ENCODE measurements at regions of chr6 and their contacts with region 1.

Region 1: DNA sequence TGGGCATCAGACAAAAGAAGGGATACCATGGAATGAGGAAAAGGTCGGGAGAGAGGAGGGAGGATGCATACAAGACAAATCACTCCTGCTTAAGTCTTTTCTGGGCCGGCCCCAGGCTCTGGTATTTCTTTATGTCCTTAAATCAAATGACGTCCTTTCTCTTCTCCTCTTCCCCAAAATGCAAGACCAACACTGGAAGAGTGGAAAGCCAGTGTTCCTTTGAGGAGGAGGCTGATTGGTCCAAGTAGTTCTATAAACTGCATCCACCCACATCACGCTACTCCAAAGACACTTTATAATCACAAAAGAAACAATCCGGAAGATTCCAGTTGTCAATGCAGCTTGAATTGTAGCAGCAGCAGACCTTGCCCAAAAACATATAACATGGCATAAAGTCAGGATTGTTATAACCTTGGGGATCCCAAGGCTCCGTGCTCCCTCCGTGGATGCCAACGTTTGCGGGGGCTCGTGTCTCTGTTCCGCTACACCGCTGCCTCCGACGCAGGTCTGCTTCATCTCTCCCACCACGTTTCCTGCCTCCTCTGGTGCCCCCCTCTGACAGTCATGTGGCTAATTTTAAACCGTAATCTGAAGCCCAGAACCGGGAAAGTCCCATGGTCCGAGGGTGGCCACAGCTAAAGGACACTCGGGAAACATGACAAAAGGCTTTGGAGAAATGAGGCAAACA is 47.1 kb downstream of the MCUR1 start:
- DNase-seq: peak; percentile 44
- H3K4me3 ChIP-seq: no peak overlapping the region
- H3K27ac ChIP-seq: no peak overlapping the region
- H3K4me1 ChIP-seq: no peaks in the 10 kb centered on the region
- H3K27me3 ChIP-seq: no peaks in the 10 kb centered on the region
- CTCF ChIP-seq: peak in 2 of 4 experiments; percentile 21 to 35
- POLR2A ChIP-seq: no peak

Region 2: GRCh38 chr6:13614926-13615798 is 152.1 kb before region 1 on chr6 and contains the start of gene NOL7:
- intact Hi-C with region 1: loop called (anchors 5 kb)
- DNase-seq: peak; percentile 94
- H3K4me3 ChIP-seq: peak within 1 kb of the TSS; percentile 71
- H3K27ac ChIP-seq: peak within 1 kb of the TSS; percentile 81 to 84
- H3K4me1 ChIP-seq: peaks cover 2% of the 10 kb centered on the region
- H3K27me3 ChIP-seq: no peaks in the 10 kb centered on the region
- CTCF ChIP-seq: peak; percentile 81 to 99 (median 96)
- POLR2A ChIP-seq: peak; percentile 69
- total RNA-seq, gene NOL7: 68.3 to 108 TPM

Region 3: DNA sequence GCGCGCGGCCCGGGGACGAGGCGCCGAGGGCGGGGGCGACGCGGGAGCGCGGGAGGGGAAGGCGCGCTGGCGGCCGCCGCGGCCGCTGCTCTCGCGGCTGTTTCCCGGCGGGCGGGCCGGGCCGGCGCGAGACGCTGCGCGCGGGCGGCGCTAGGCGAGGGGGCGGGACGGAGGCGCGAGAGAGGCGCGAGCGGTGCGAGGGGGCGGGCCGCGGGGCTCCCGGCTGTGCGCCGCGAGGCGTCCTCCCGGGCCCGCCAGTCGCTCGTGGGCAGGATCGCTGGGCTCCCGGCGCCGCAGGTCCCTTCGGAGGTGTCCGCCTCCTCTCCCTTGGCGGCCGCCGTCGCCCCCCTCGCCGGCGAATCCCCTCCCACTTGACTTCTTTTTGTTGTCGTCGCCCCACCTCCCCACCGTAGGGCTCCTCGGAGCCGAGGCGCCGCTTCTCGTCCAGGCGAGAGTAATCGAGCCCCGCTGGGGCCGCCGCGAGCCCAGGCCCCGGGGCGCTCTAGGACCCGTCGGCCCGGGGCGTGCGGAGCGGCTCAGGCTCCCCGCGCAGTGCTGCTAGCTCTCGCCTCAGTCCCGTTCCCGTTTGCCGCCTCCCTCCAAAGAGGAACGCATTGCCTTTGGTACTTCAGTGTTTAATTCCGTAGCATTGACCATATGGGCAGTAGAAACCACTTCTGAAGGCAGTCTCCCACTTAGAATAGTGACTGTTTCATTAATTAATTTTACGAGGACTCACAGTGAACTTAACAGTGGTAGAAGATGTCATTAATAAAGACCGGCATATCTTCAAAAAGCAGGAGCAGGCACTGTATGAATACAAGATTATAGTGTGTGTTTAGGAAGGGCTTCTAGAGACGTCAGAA is 55.3 kb before region 1 on chr6 and contains the start of gene RANBP9:
- intact Hi-C with region 1: loop called (anchors 5 kb)
- DNase-seq: peak; percentile 82
- H3K4me3 ChIP-seq: peak within 1 kb of the TSS; percentile 78 to 81
- H3K27ac ChIP-seq: peak within 1 kb of the TSS; percentile 95 to 98
- H3K4me1 ChIP-seq: peaks cover 4% of the 10 kb centered on the region
- H3K27me3 ChIP-seq: no peaks in the 10 kb centered on the region
- CTCF ChIP-seq: no peak
- POLR2A ChIP-seq: peak; percentile 72
- total RNA-seq, gene RANBP9: 37.8 to 59.0 TPM

Region 4: GRCh38 chr6:13807696-13808095 is 40.4 kb after region 1 on chr6:
- intact Hi-C with region 1: no loop called
- DNase-seq: no peak
- H3K4me3 ChIP-seq: no peak overlapping the region
- H3K27ac ChIP-seq: no peak overlapping the region
- H3K4me1 ChIP-seq: no peaks in the 10 kb centered on the region
- H3K27me3 ChIP-seq: no peaks in the 10 kb centered on the region
- CTCF ChIP-seq: no peak
- POLR2A ChIP-seq: no peak